HepG2 (cell line): ENCODE measurements at regions of chr14 and their contacts with region 1.

Region 1: GRCh38 chr14:54347997-54348611 is 48.7 kb upstream of the CDKN3 start:
- DNase-seq: peak; percentile 75
- ATAC-seq: peak; percentile 77
- H3K4me3 ChIP-seq: no peak overlapping the region
- H3K27ac ChIP-seq: no peak overlapping the region
- H3K4me1 ChIP-seq: peaks cover 54% of the 10 kb centered on the region
- H3K27me3 ChIP-seq: no peaks in the 10 kb centered on the region
- CTCF ChIP-seq: peak; percentile 87
- EP300 ChIP-seq: no peak
- POLR2A ChIP-seq: no peak
- RAD21 ChIP-seq: peak; percentile 87

Region 2: GRCh38 chr14:53295985-53296582 is 1052.0 kb before region 1 on chr14:
- CTCF ChIA-PET with region 1: interaction called, 16 read pairs
- POLR2A ChIA-PET with region 1: no interaction called
- in situ Hi-C with region 1: loop called (anchors 10 kb)
- intact Hi-C with region 1: loop called (anchors 1 kb)
- DNase-seq: peak; percentile 17
- ATAC-seq: no peak
- H3K4me3 ChIP-seq: no peak overlapping the region
- H3K27ac ChIP-seq: no peak overlapping the region
- H3K4me1 ChIP-seq: no peaks in the 10 kb centered on the region
- H3K27me3 ChIP-seq: peaks cover 0 to 18% of the 10 kb centered on the region in 2 experiments; a peak in 1 of 5 replicates
- CTCF ChIP-seq: peak; percentile 57
- EP300 ChIP-seq: no peak
- POLR2A ChIP-seq: no peak
- RAD21 ChIP-seq: no peak

Region 3: DNA sequence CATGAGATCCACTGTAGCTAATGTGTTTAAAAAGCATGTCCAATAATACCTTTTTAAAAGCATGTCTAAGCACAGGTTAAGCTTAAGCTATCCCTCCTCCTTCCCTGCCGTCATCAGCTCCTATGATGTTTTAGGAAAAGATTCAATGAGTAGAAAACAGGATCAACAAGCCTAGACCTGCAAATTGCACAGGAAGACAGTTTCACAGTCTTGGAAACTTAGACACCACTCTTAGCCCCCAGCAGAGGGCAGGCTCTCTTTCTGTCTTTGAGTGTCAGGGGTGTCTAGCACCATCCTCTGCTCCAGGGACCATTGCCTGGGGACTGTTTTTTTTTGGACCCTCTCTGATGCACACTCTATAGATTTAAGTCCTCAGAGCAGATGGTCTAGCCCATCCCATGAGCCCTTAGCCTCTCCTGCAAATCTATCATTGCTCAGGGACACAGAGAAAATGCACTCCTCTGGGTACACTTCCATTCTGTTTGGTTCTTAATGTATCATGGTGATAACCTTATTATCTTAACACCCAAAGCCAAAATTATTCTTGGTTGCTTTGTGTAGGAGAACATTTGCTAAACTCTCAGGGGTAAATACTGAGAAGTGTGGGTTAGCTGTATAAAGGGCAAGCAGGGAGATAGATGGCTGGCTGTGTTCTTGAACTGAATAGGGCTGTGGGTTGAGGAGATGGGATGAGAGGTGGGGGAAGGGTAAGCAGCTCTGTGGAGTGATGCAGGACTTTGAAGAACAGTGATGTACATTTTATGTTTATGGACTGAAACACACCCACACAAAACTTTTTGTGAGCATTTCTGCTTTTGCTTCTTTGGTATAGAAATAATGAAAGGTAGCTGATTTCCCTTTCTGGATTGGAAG is 935.1 kb before region 1 on chr14:
- CTCF ChIA-PET with region 1: interaction called, 7 read pairs
- POLR2A ChIA-PET with region 1: no interaction called
- in situ Hi-C with region 1: loop called (anchors 10 kb)
- intact Hi-C with region 1: loop called (anchors 5 kb)
- DNase-seq: peak; percentile 30
- ATAC-seq: peak; percentile 79
- H3K4me3 ChIP-seq: no peak overlapping the region
- H3K27ac ChIP-seq: no peak overlapping the region
- H3K4me1 ChIP-seq: no peaks in the 10 kb centered on the region
- H3K27me3 ChIP-seq: no peaks in the 10 kb centered on the region
- CTCF ChIP-seq: peak; percentile 69
- EP300 ChIP-seq: no peak
- POLR2A ChIP-seq: no peak
- RAD21 ChIP-seq: peak; percentile 16; the same call in 1 of the 2 replicates

Region 4: GRCh38 chr14:53432378-53432802 is 915.7 kb before region 1 on chr14:
- CTCF ChIA-PET with region 1: interaction called, 6 read pairs
- POLR2A ChIA-PET with region 1: no interaction called
- in situ Hi-C with region 1: no loop called
- intact Hi-C with region 1: loop called (anchors 5 kb)
- DNase-seq: peak; percentile 59
- ATAC-seq: peak; percentile 92
- H3K4me3 ChIP-seq: no peak overlapping the region
- H3K27ac ChIP-seq: no peak overlapping the region
- H3K4me1 ChIP-seq: peaks cover 27% of the 10 kb centered on the region
- H3K27me3 ChIP-seq: no peaks in the 10 kb centered on the region
- CTCF ChIP-seq: peak; percentile 92
- EP300 ChIP-seq: no peak
- POLR2A ChIP-seq: no peak
- RAD21 ChIP-seq: peak; percentile 88

Region 5: GRCh38 chr14:53655080-53655785 is 692.9 kb before region 1 on chr14:
- CTCF ChIA-PET with region 1: no interaction called
- POLR2A ChIA-PET with region 1: no interaction called
- in situ Hi-C with region 1: loop called (anchors 10 kb)
- intact Hi-C with region 1: no loop called
- DNase-seq: no peak
- ATAC-seq: no peak
- H3K4me3 ChIP-seq: no peak overlapping the region
- H3K27ac ChIP-seq: no peak overlapping the region
- H3K4me1 ChIP-seq: no peaks in the 10 kb centered on the region
- H3K27me3 ChIP-seq: no peaks in the 10 kb centered on the region
- CTCF ChIP-seq: no peak
- EP300 ChIP-seq: no peak
- POLR2A ChIP-seq: no peak
- RAD21 ChIP-seq: no peak

Region 6: DNA sequence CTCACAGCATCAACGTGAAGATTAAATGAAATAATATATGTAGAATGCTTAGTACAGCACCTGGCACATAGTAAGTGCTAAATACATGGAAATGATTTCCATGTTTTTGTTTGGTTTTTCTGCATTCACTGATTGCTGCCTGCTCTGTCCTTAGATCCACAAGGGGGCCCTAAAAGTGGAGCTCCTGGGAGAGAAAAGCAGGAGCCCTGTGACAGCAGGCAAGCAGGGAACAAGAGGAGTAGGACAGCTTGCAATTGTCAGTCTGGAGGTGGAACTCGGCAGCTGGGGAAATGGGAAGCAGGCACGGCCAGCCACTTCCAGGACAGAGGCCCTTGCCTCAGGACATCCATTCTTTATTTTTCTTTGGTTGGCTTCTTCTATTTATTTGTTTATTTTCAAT is 684.4 kb before region 1 on chr14:
- CTCF ChIA-PET with region 1: no interaction called
- POLR2A ChIA-PET with region 1: no interaction called
- in situ Hi-C with region 1: loop called (anchors 10 kb)
- intact Hi-C with region 1: loop called (anchors 1 kb)
- DNase-seq: peak; percentile 76
- ATAC-seq: peak; percentile 99
- H3K4me3 ChIP-seq: no peak overlapping the region
- H3K27ac ChIP-seq: no peak overlapping the region
- H3K4me1 ChIP-seq: peaks cover 17% of the 10 kb centered on the region
- H3K27me3 ChIP-seq: no peaks in the 10 kb centered on the region
- CTCF ChIP-seq: peak; percentile 69
- EP300 ChIP-seq: no peak
- POLR2A ChIP-seq: no peak
- RAD21 ChIP-seq: peak; percentile 80

Region 7: DNA sequence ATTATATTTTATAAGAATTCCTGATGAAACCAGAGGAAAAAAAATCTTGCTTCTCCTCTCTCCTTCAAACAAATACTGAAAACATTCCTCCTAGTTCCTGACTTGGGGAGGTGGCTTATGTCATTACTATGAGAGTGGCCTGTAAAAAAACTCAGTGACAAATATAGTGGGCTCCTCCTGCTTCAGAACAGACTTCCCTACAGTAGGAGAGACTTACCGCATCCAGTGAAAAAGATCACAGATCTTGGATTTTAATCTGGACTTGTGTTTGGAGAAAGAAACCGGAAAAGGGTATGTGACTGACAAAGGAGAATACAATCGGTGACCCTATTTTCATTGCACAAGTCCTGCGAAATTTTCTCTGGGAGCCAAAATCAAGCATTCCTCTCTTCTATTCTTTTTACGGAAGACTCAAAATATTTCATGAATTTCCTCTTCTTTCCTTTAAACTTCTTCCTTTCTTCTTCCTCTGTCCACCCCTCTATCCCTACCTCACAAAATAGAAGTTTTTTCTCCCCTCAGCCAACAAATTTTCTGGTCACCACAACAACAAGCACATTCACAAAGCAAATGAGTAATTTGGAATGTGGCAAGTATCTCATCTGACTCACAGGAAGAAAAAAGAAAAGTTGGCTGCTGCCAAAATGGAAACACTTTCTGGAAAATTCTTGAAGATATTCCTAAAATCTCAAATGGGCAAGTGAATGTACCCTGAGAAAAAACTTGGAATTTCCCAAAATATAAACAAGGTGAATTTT is 136.4 kb before region 1 on chr14:
- CTCF ChIA-PET with region 1: no interaction called
- POLR2A ChIA-PET with region 1: no interaction called
- in situ Hi-C with region 1: no loop called
- intact Hi-C with region 1: no loop called
- DNase-seq: no peak
- ATAC-seq: no peak
- H3K4me3 ChIP-seq: no peak overlapping the region
- H3K27ac ChIP-seq: no peak overlapping the region
- H3K4me1 ChIP-seq: peaks cover 30% of the 10 kb centered on the region
- H3K27me3 ChIP-seq: no peaks in the 10 kb centered on the region
- CTCF ChIP-seq: no peak
- EP300 ChIP-seq: no peak
- POLR2A ChIP-seq: no peak
- RAD21 ChIP-seq: no peak

Region 8: DNA sequence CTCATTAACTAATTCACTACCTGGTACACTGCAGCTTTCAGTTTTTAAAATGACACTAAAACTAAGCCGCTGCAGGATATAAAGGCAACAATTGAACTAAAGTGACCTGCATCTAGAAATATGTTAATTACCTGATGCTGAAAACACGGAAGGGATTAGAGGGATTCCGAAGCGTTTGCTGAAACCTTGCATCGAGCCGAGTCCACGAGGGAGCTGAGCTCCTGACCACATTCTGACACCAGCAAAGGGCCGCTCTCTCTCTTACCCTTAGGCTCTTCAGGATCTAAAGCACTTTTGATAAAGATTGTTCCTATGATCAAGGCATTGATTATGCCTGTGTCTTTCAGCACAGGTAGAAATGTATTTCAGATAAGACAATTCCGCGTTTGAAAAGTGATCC is 10.8 kb before region 1 on chr14:
- CTCF ChIA-PET with region 1: no interaction called
- POLR2A ChIA-PET with region 1: no interaction called
- in situ Hi-C with region 1: no loop called
- intact Hi-C with region 1: no loop called
- DNase-seq: no peak
- ATAC-seq: no peak
- H3K4me3 ChIP-seq: no peak overlapping the region
- H3K27ac ChIP-seq: no peak overlapping the region
- H3K4me1 ChIP-seq: 0 out of 2 replicates have a peak, but pooled peaks cover 6% of the 10 kb centered on the region
- H3K27me3 ChIP-seq: no peaks in the 10 kb centered on the region
- CTCF ChIP-seq: no peak
- EP300 ChIP-seq: no peak
- POLR2A ChIP-seq: no peak
- RAD21 ChIP-seq: no peak

Region 9: GRCh38 chr14:54387328-54387727 is 39.2 kb after region 1 on chr14:
- CTCF ChIA-PET with region 1: no interaction called
- POLR2A ChIA-PET with region 1: no interaction called
- in situ Hi-C with region 1: no loop called
- intact Hi-C with region 1: no loop called
- DNase-seq: peak; percentile 35
- ATAC-seq: peak; percentile 48
- H3K4me3 ChIP-seq: peak overlapping the region in 1 of 3 experiments; percentile 9; a peak in 1 of 6 replicates
- H3K27ac ChIP-seq: no peak overlapping the region
- H3K4me1 ChIP-seq: peaks cover 33% of the 10 kb centered on the region
- H3K27me3 ChIP-seq: no peaks in the 10 kb centered on the region
- CTCF ChIP-seq: no peak
- EP300 ChIP-seq: no peak
- POLR2A ChIP-seq: no peak
- RAD21 ChIP-seq: no peak

Region 10: GRCh38 chr14:54420013-54420809 is 72.1 kb after region 1 on chr14:
- CTCF ChIA-PET with region 1: interaction called, 3 read pairs
- POLR2A ChIA-PET with region 1: interaction called, 5 read pairs
- in situ Hi-C with region 1: no loop called
- intact Hi-C with region 1: loop called (anchors 1 kb)
- DNase-seq: peak; percentile 46
- ATAC-seq: peak; percentile 57
- H3K4me3 ChIP-seq: no peak overlapping the region
- H3K27ac ChIP-seq: peak overlapping the region; percentile 60
- H3K4me1 ChIP-seq: peaks cover 29% of the 10 kb centered on the region
- H3K27me3 ChIP-seq: no peaks in the 10 kb centered on the region
- CTCF ChIP-seq: peak; percentile 73
- EP300 ChIP-seq: no peak
- POLR2A ChIP-seq: no peak
- RAD21 ChIP-seq: peak; percentile 55; the same call in 1 of the 2 replicates